ENCODE measurements at regions of chr4 and their contacts with region 1.

Region 1: GRCh38 chr4:15457406-15458201 is 12.1 kb upstream of the CC2D2A start:
- DNase-seq: peak; percentile 46
- ATAC-seq: peak; percentile 71
- H3K4me3 ChIP-seq: no peak overlapping the region
- H3K27ac ChIP-seq: no peak overlapping the region
- H3K4me1 ChIP-seq: peaks cover 1% of the 10 kb centered on the region
- H3K27me3 ChIP-seq: peaks cover 14% of the 10 kb centered on the region
- CTCF ChIP-seq: peak; percentile 69

Region 2: DNA sequence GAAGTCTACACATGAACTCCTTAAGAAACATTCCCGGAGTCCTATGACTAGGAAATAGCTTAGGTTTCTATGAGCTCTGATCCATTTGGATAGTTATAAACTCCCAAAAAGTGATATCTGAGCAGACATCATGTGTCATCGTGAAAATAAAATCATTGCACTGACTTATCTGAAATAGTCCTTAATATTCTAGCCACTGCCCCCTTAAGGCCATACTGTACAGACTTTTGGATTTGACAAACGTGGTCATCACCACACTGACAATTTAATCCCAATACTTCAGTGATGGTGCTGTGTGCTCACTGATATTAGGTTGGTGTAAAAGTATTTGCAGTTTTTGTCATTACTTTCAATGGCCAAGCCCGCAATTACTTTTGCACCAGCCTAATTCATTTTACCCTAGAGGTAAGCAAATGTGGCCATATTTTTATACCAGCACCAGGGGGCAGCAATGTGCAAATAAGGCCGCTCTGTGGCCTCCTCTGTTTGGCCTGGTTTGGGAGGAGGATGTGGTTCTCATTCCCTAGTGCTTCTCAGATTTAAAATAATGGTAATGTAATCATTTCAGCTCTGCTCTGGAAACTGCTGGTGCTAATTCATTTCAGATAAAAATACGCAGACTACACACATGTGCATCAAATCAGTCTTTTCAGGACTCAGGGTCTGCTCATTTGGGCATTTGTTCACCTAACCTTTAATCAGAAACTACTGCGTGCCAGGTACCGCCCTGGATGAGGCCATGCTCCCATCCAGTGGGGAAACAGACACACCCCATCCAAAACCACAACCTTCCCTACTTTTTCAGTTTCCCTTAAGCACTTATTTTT is 226.1 kb before region 1 on chr4:
- CTCF ChIA-PET with region 1: no interaction called
- POLR2A ChIA-PET with region 1: no interaction called
- intact Hi-C with region 1: loop called (anchors 2 kb)
- DNase-seq: peak; percentile 79
- ATAC-seq: peak; percentile 62
- H3K4me3 ChIP-seq: no peak overlapping the region
- H3K27ac ChIP-seq: no peak overlapping the region
- H3K4me1 ChIP-seq: peaks cover 19% of the 10 kb centered on the region
- H3K27me3 ChIP-seq: no peaks in the 10 kb centered on the region
- CTCF ChIP-seq: peak; percentile 80

Region 3: GRCh38 chr4:15238720-15239119 is 218.9 kb before region 1 on chr4:
- CTCF ChIA-PET with region 1: no interaction called
- POLR2A ChIA-PET with region 1: no interaction called
- intact Hi-C with region 1: loop called (anchors 1 kb)
- DNase-seq: peak; percentile 56
- ATAC-seq: peak; percentile 35; the same call in 1 of the 2 replicates
- H3K4me3 ChIP-seq: no peak overlapping the region
- H3K27ac ChIP-seq: no peak overlapping the region
- H3K4me1 ChIP-seq: peaks cover 13% of the 10 kb centered on the region
- H3K27me3 ChIP-seq: no peaks in the 10 kb centered on the region
- CTCF ChIP-seq: peak; percentile 72

Region 4: GRCh38 chr4:15396157-15396800 is 61.3 kb before region 1 on chr4:
- CTCF ChIA-PET with region 1: no interaction called
- POLR2A ChIA-PET with region 1: no interaction called
- intact Hi-C with region 1: loop called (anchors 10 kb)
- DNase-seq: peak; percentile 67
- ATAC-seq: peak; percentile 70
- H3K4me3 ChIP-seq: no peak overlapping the region
- H3K27ac ChIP-seq: no peak overlapping the region
- H3K4me1 ChIP-seq: no peaks in the 10 kb centered on the region; the same call in 1 of the 2 replicates
- H3K27me3 ChIP-seq: no peaks in the 10 kb centered on the region
- CTCF ChIP-seq: peak; percentile 76

Region 5: DNA sequence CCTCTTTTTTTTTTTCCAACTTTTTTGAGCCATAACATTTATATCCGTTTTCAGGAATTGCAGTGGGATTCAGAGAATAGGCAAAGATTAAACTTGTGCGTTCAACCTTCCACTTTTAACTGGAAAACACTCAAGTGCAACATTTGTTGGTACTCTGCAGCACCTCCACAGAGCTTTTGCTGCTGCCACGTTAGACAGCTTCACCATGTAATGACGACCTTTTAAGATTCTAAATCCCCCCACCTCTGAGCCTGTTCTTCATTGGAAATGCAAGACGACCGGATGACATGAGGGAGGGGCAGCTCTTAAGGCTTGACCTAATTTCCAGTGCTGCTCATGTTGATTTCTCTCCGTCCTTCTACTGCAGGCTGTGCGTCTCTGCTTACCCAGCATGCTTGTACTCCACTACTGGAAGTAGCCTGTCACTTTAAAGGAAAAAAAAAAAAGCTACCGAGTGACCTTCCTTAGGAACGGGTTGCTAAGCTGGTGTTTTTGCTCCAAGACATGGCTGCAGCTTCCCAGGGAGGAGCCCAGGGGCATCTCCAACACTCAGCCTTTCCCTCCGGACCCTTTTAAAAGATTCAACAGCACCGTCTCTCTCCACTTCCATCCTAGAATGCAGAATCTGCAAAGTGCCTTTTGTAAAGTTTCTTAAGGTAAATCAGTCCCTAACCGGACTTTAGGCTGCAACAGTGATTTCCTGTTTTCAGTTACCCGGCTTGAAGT is 12.0 kb after region 1 on chr4 and contains the start of gene CC2D2A:
- CTCF ChIA-PET with region 1: interaction called, 10 read pairs
- POLR2A ChIA-PET with region 1: no interaction called
- intact Hi-C with region 1: no loop called
- DNase-seq: peak; percentile 47
- ATAC-seq: peak; percentile 88
- H3K4me3 ChIP-seq: peak within 1 kb of the TSS; percentile 73
- H3K27ac ChIP-seq: no peak within 1 kb of the TSS
- H3K4me1 ChIP-seq: peaks cover 4% of the 10 kb centered on the region; the same call in 1 of the 2 replicates
- H3K27me3 ChIP-seq: peaks cover 7% of the 10 kb centered on the region; the same call in 1 of the 2 replicates
- CTCF ChIP-seq: no peak
- total RNA-seq, gene CC2D2A: 13.1 and 13.4 TPM in 2 replicates

Measured in PC-3 (cell line).